Transverse colon (tissue), 4 donors: ENCODE measurements at regions of chr19 and their contacts with region 1.

Region 1: GRCh38 chr19:47848823-47849473 is 10.1 kb upstream of the TPRX2 start:
- DNase-seq: no peak
- H3K4me3 ChIP-seq: no peak overlapping the region
- H3K27ac ChIP-seq: no peak overlapping the region
- H3K4me1 ChIP-seq: peaks cover 0 to 3% (median 0%) of the 10 kb centered on the region in 4 donors
- H3K27me3 ChIP-seq: peaks cover 57% of the 10 kb centered on the region
- CTCF ChIP-seq: peak in 3 of 5 experiments; percentile 9 to 25 (median 21)
- EP300 ChIP-seq: no peak
- POLR2A ChIP-seq: no peak

Region 2: DNA sequence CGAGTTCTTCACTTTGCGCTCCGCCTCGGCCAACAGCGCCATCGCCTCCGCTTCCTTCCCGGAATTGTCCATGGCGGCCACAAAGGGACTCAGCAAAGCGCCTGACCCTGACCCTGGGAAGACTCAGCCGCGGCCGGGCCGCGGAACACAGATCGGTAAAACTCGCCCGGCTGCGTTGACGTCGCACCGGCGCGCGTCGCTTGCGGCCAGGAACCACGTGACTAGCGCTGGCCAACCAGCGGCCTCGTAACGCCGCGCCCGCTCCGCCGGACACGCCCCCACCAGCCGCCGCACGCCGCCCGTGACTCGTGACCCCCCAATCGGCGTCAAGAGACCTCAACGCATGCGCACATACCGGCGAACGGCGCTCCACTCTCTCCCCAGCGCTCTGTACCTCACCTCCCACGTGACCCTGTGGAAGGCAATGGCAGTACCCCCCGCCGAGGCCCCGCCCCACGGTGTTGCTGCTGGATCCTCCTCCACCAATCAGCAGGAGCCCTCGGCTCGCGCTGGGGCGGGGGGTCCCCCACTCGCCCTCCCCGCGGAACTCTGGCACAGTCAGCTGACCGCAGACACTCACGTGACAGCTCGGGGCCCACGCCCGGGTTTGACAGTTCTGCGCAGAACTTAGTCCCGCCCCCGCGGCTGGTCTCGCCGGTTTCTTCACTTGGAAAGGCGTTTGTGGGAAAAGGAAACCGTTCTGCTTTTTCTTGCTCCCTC is 333.9 kb before region 1 on chr19 and contains the start of gene NAPA:
- in situ Hi-C with region 1: no loop called
- intact Hi-C with region 1: no loop called
- DNase-seq: peak; percentile 100
- H3K4me3 ChIP-seq: peak within 1 kb of the TSS; percentile 82 to 98 (median 92)
- H3K27ac ChIP-seq: peak within 1 kb of the TSS; percentile 95 to 99 (median 98)
- H3K4me1 ChIP-seq: peaks cover 33 to 46% (median 38%) of the 10 kb centered on the region in 4 donors
- H3K27me3 ChIP-seq: no peaks in the 10 kb centered on the region
- CTCF ChIP-seq: no peak
- EP300 ChIP-seq: no peak
- POLR2A ChIP-seq: peak; percentile 99
- total RNA-seq, gene NAPA: 94.8 to 138 (median 114) TPM

Region 3: DNA sequence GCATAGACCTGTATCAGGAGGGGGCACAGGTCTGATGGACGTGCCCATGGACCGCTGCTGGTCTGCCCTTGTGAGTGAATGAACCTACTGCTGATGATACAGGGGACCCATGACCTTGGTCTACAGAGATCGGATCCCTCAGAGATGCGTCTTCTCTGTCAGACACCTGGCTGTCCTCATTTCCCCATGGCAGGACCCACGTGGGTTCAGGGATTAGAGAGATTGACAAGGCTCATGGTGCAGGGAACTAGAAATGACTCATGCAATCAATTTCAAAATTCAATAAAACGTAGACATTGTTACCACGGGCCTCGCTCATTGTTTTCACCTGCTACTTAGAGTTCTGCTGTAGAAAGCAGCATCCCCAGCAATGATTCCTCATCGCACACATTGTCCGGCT is 43.6 kb before region 1 on chr19:
- in situ Hi-C with region 1: no loop called
- intact Hi-C with region 1: no loop called
- DNase-seq: no peak
- H3K4me3 ChIP-seq: no peak overlapping the region
- H3K27ac ChIP-seq: no peak overlapping the region
- H3K4me1 ChIP-seq: no peaks in the 10 kb centered on the region
- H3K27me3 ChIP-seq: no peaks in the 10 kb centered on the region
- CTCF ChIP-seq: no peak
- EP300 ChIP-seq: no peak
- POLR2A ChIP-seq: no peak

Region 4: GRCh38 chr19:48006762-48007161 is 157.8 kb after region 1 on chr19:
- in situ Hi-C with region 1: loop called in 1 of 4 experiments (anchors 25 kb)
- intact Hi-C with region 1: no loop called
- DNase-seq: no peak
- H3K4me3 ChIP-seq: no peak overlapping the region
- H3K27ac ChIP-seq: no peak overlapping the region
- H3K4me1 ChIP-seq: no peaks in the 10 kb centered on the region
- H3K27me3 ChIP-seq: no peaks in the 10 kb centered on the region
- CTCF ChIP-seq: no peak
- EP300 ChIP-seq: no peak
- POLR2A ChIP-seq: no peak

Region 5: GRCh38 chr19:48608798-48609263 is 759.9 kb after region 1 on chr19:
- in situ Hi-C with region 1: no loop called
- intact Hi-C with region 1: no loop called
- DNase-seq: peak; percentile 68
- H3K4me3 ChIP-seq: no peak overlapping the region
- H3K27ac ChIP-seq: peak overlapping the region in 1 of 4 donors; percentile 34
- H3K4me1 ChIP-seq: peaks cover 0 to 12% (median 7%) of the 10 kb centered on the region in 4 donors
- H3K27me3 ChIP-seq: no peaks in the 10 kb centered on the region
- CTCF ChIP-seq: peak; percentile 30 to 47 (median 37)
- EP300 ChIP-seq: no peak
- POLR2A ChIP-seq: no peak